Posterior cingulate gyrus (tissue), 11 donors: ENCODE measurements at regions of chr4 and their contacts with region 1.

Region 1: GRCh38 chr4:104860238-104861123 is 286.2 kb upstream of the TET2 start:
- DNase-seq: peak in 4 of 10 donors; percentile 35 to 62 (median 46)

Region 2: GRCh38 chr4:103996637-103997036 is 863.8 kb before region 1 on chr4:
- intact Hi-C with region 1: loop called (anchors 5 kb)
- DNase-seq: peak in 6 of 10 donors; percentile 9 to 70 (median 20)

Region 3: DNA sequence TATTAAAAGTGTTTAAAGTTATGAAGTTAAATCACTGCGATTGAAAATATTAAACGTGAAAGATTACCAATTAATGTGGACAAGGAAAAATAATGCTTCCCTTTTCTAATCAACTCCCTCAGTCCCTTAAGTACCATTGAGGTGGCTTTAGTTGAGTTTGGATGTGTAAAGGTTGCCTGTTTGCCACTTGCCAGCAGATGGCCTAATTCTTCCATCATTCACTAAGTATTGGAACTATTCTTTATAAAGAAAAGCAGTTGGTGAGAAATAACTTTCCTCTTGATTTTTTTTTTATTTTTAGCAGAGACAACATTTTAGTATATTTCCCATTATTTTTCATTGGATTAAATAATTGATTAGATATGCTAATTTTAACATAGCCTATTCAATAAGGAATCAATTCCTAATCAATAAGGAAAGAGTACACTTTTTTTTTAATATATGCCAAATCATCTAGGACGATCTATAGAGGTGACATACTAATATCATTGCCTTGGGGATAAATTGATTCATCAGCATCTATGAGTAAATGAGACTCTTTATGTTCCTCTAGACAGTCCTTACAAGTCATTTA is 844.7 kb before region 1 on chr4:
- intact Hi-C with region 1: loop called (anchors 5 kb)
- DNase-seq: peak in 2 of 10 donors; percentile 3 to 38

Region 4: DNA sequence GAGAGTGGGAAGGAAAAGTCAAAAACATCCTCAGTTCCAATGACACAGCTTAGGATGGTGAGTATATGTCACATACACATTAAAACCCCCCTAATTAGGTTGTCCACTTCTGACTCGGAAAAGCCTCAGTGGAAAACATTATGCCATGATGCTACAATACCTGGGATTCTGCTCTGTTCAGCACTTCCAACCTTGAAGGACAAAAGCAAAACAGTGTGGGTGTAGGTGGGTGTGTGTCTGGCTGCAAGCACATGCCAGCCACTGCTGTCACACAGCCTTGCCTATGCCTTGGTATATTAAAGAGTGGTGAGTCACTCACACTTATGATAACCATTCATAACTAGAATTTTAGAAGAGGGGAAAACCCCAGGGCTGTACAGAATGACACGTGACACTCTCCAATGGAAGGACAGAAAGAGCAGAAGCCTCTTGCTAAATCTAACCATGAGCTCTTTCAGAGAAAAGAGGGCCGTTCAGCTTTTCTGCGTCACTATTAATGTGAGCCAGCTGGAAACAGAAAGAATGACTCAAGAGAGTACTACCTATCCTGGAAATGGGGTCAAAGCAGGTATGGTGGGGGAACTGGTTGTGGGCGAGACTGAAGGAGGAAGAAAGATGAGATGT is 445.8 kb after region 1 on chr4:
- intact Hi-C with region 1: no loop called
- DNase-seq: peak in 1 of 10 donors; percentile 31

Region 5: DNA sequence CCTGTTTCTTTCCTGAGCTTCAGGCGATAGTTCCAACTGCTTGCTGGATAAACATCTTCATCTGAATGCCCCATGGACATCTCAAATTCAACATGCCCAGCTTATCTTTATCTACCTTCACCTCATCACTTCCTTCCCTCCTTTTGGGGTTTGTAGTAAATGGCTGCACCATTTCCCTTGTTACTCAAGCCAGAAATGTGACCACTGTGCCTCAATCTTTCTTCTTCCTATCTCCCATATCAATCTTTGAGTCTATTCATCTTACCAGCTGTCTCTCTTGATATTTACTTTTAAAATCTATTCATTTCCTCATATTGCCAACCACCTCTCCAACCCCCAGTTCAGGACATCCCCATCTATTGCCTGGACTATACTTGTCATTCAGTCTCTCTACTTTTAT is 458.0 kb after region 1 on chr4:
- intact Hi-C with region 1: no loop called
- DNase-seq: no peak

Region 6: DNA sequence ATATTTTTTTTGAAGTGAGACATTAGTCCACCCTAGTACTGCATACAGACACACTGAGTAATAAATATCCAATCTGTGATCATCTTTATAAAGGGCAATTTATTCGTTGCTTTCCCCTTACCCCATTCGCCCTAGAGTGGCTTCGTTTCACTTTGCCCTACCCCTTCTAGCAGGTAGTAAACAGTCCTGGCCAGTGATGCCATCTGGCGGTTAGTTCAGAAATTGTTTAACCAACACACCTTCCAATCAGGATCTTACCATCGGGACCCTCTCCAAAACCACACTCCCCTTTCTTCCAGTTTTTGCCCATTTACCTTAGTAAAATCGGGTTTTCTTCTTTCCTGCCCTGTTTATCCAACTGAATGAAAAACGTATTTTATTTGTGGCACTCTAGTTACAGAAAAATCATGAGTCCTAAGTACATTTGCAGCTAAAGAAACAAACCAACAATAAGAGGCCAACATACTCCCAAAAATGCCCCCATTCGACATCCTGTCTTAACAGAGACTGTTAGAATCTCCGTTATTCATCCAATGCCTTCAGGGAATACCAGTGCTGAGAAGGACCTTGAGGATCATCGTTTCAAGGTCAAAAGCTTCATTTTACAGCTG is 611.2 kb after region 1 on chr4:
- intact Hi-C with region 1: loop called (anchors 2 kb)
- DNase-seq: peak in 6 of 10 donors; percentile 54 to 87 (median 62)